ENCODE measurements at regions of chr2 and their contacts with region 1.

Region 1: GRCh38 chr2:152475982-152476381 is 141.0 kb downstream of the FMNL2 start:
- DNase-seq: no peak
- H3K4me3 ChIP-seq: no peak overlapping the region
- H3K27ac ChIP-seq: no peak overlapping the region
- H3K4me1 ChIP-seq: peaks cover 33% of the 10 kb centered on the region
- H3K27me3 ChIP-seq: no peaks in the 10 kb centered on the region
- CTCF ChIP-seq: no peak

Region 2: DNA sequence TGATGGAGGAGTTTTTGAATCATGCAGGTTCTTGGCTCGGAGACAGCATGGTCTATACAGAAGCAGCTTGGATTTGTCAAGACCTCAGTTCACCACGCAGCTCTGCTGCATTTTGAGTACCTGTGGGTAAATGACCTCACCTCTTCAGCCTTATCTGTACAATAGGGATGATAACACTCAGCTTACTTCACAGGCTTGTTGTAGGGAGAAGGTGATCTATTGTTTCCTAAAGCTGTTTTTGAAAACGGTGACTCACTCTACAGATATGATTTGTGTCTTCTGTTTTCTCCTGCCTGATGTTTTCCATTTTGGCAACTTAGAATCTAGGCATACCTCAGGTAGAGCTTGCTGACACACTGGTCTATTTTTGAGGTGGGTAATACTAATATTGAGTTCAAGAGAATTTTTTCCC is 60.7 kb before region 1 on chr2:
- CTCF ChIA-PET with region 1: no interaction called
- POLR2A ChIA-PET with region 1: interaction called, 10 read pairs
- intact Hi-C with region 1: no loop called
- DNase-seq: peak; percentile 33 to 88
- H3K4me3 ChIP-seq: no peak overlapping the region
- H3K27ac ChIP-seq: peak overlapping the region; percentile 60
- H3K4me1 ChIP-seq: peaks cover 62% of the 10 kb centered on the region
- H3K27me3 ChIP-seq: no peaks in the 10 kb centered on the region
- CTCF ChIP-seq: no peak

Region 3: GRCh38 chr2:152657043-152657442 is 181.1 kb after region 1 on chr2:
- CTCF ChIA-PET with region 1: no interaction called
- POLR2A ChIA-PET with region 1: no interaction called
- intact Hi-C with region 1: no loop called
- DNase-seq: no peak
- H3K4me3 ChIP-seq: no peak overlapping the region
- H3K27ac ChIP-seq: no peak overlapping the region
- H3K4me1 ChIP-seq: no peaks in the 10 kb centered on the region
- H3K27me3 ChIP-seq: no peaks in the 10 kb centered on the region
- CTCF ChIP-seq: no peak